PC-9 (cell line): ENCODE measurements at regions of chr5 and their contacts with region 1.

Region 1: DNA sequence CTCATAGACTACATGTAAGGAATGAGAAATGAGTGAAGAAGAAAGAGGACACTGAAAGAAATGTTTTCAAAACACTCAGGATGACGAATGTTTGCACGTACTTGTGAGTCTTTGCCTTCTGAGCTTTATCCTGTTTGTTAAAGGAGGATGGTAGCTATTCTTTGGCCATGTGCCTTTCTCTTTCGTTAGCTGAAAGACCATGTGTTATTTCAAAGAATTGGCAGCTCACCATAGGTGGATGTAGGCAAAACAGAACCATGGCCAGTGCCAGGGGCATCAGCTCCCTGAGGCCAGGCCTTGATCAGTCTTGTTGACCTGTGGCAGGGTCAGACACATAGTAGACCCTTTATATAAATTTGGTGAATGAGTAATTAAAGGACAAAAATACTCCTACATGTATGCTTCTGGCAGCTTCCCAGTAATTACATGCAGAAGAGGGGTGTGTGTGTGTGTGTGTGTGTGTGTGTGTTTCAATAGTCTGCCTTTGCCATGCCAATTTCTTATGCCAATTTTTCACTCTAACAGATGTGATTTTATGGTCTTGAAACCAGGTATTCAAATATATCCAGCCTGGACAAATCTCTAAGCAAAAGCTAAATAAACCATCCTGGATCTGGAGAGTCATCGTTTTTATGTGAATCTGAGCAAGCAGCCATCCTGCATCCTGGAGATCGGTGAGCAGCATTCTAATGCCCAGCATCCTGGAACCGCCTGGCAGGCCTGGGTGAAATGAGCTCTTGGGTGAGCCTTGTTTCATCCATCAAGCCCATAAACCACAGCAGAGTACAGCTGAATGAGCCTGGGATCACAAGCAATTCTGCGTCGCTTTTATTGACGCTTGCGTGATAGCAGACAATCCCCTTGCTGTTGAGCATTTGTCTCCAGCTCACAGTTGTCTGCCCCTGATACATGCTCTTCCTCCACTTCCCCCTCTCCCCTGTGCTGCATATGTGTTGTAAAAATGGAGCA is 475.4 kb downstream of the MED10 start:
- DNase-seq: no peak
- H3K4me3 ChIP-seq: no peak overlapping the region
- H3K27ac ChIP-seq: no peak overlapping the region
- H3K4me1 ChIP-seq: no peaks in the 10 kb centered on the region
- H3K27me3 ChIP-seq: no peaks in the 10 kb centered on the region
- CTCF ChIP-seq: no peak

Region 2: DNA sequence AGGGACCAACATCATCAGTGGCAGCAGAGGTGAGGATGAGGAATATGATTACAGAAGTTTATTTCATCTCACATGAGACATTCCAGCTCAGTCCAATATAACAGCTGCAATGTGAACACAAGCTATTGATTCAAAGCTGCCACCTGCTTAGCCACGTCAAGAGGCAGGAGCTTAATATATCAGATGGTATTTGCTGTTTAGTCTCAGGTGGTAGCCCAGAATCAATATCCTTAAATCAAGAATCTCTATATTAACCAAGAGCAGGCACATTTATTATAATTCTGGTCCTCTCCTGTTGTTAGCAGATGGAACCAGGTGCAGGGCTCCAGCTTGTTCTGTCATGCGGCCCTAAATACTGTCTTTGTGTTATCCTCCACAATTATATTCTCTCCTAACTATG is 48.9 kb before region 1 on chr5:
- CTCF ChIA-PET with region 1: no interaction called
- POLR2A ChIA-PET with region 1: no interaction called
- intact Hi-C with region 1: loop called (anchors 2 kb)
- DNase-seq: no peak
- H3K4me3 ChIP-seq: no peak overlapping the region
- H3K27ac ChIP-seq: no peak overlapping the region
- H3K4me1 ChIP-seq: no peaks in the 10 kb centered on the region
- H3K27me3 ChIP-seq: peaks cover 32% of the 10 kb centered on the region; the same call in 1 of the 2 replicates
- CTCF ChIP-seq: no peak

Region 3: DNA sequence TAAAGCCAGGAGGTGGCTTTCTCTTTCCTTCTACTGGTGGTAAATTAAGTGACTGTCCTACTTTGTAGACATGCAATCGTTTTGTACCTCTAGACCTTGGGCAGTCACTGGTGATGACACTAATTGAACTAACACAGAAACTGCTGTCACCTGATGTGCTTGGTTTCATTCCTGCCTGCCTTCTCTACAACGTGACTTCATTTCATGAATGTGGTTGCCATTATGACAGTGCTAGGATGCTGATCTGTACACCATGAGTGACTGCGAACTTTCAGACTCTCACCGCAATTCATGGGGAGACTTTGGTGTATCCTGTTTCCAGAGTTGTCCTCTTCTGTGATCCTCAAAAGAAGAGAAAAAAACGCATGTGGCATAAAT is 593.2 kb after region 1 on chr5:
- CTCF ChIA-PET with region 1: no interaction called
- POLR2A ChIA-PET with region 1: no interaction called
- intact Hi-C with region 1: no loop called
- DNase-seq: no peak
- H3K4me3 ChIP-seq: no peak overlapping the region
- H3K27ac ChIP-seq: no peak overlapping the region
- H3K4me1 ChIP-seq: peaks cover 9% of the 10 kb centered on the region
- H3K27me3 ChIP-seq: peaks cover 98% of the 10 kb centered on the region
- CTCF ChIP-seq: no peak